ENCODE measurements at regions of chr4 and their contacts with region 1.

Region 1: GRCh38 chr4:184369871-184370270 is 104.5 kb downstream of the IRF2 start:
- DNase-seq: no peak
- ATAC-seq: no peak
- H3K4me3 Mint-ChIP-seq: no peak overlapping the region
- H3K27ac Mint-ChIP-seq: no peak overlapping the region
- H3K4me1 Mint-ChIP-seq: peaks cover 27% of the 10 kb centered on the region
- H3K27me3 Mint-ChIP-seq: no peaks in the 10 kb centered on the region
- CTCF ChIP-seq: no peak

Region 2: GRCh38 chr4:184355111-184355604 is 14.7 kb before region 1 on chr4:
- CTCF ChIA-PET with region 1: no interaction called
- POLR2A ChIA-PET with region 1: interaction called, 4 read pairs
- intact Hi-C with region 1: loop called (anchors 2 kb)
- DNase-seq: no peak
- ATAC-seq: peak; percentile 58
- H3K4me3 Mint-ChIP-seq: no peak overlapping the region
- H3K27ac Mint-ChIP-seq: peak overlapping the region; percentile 27
- H3K4me1 Mint-ChIP-seq: peaks cover 33% of the 10 kb centered on the region
- H3K27me3 Mint-ChIP-seq: no peaks in the 10 kb centered on the region
- CTCF ChIP-seq: no peak

Region 3: GRCh38 chr4:184395971-184396391 is 26.1 kb after region 1 on chr4:
- CTCF ChIA-PET with region 1: no interaction called
- POLR2A ChIA-PET with region 1: no interaction called
- intact Hi-C with region 1: no loop called
- DNase-seq: no peak
- ATAC-seq: peak; percentile 77
- H3K4me3 Mint-ChIP-seq: peak overlapping the region; percentile 81
- H3K27ac Mint-ChIP-seq: peak overlapping the region; percentile 95
- H3K4me1 Mint-ChIP-seq: peaks cover 46% of the 10 kb centered on the region
- H3K27me3 Mint-ChIP-seq: no peaks in the 10 kb centered on the region
- CTCF ChIP-seq: no peak

Region 4: GRCh38 chr4:184688447-184688846 is 318.6 kb after region 1 on chr4:
- CTCF ChIA-PET with region 1: no interaction called
- POLR2A ChIA-PET with region 1: no interaction called
- intact Hi-C with region 1: no loop called
- DNase-seq: no peak
- ATAC-seq: no peak
- H3K4me3 Mint-ChIP-seq: no peak overlapping the region
- H3K27ac Mint-ChIP-seq: no peak overlapping the region
- H3K4me1 Mint-ChIP-seq: no peaks in the 10 kb centered on the region
- H3K27me3 Mint-ChIP-seq: no peaks in the 10 kb centered on the region
- CTCF ChIP-seq: no peak